Activated naive CD4-positive, alpha-beta T cell treated with anti-CD3 and anti-CD28 coated beads, Interleukin-2, amount 10 ng/mL, durations not matched to agents 7 days and 5 days (primary cell): ENCODE measurements at regions of chr7 and their contacts with region 1.

Region 1: GRCh38 chr7:100221231-100221718 is 1.5 kb downstream of the PVRIG start:
- DNase-seq: peak; percentile 88
- H3K4me3 Mint-ChIP-seq: peak overlapping the region; percentile 87
- H3K27ac Mint-ChIP-seq: peak overlapping the region; percentile 97
- H3K4me1 Mint-ChIP-seq: peaks cover 71% of the 10 kb centered on the region
- H3K27me3 Mint-ChIP-seq: no peaks in the 10 kb centered on the region

Region 2: DNA sequence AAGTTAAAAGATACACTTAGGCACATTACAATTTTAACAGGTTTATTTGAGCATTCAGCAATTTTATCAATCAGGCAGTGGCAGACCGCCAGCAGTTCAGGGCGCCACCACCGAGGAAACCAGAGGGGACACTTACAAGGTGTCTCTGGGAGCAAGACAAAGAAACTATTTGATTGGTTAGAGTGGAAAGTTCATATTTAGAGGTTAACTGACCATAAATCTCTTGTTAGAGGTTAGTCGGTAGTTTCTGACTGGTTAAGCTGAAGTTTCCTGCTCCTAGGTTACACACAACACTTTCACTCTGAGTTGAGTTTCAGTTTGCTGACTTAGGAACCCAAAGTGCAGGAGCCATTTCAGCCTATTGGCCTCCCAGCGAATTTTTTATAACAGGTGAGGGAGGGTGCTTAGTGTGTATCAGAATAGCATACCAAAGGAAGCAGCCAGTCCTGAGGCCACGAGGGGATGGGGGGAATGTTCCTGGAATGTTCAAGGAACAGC is 12.3 kb before region 1 on chr7:
- CTCF ChIA-PET with region 1: interaction called, 18 read pairs
- DNase-seq: peak; percentile 69
- H3K4me3 Mint-ChIP-seq: peak overlapping the region; percentile 49
- H3K27ac Mint-ChIP-seq: peak overlapping the region; percentile 85
- H3K4me1 Mint-ChIP-seq: peaks cover 56% of the 10 kb centered on the region
- H3K27me3 Mint-ChIP-seq: no peaks in the 10 kb centered on the region

Region 3: DNA sequence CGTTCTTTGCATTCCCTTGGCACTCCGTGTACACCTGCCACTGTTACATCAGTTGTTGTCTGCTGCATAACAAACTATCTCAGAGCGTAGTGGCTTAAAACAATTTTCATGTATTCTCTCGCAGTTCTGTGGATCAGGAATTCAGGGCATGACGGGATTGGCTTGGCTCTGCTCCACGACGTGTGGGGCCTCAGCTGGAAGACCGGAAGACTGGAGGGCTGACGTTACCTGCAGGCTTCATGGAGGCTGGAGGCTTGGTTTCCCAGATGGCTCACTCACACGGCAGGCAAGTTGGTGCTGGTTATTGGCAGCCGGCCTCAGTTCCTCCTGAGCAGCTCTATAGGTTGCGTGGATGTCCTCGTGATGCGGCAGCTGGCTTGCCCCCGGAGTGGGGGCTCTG is 288.0 kb after region 1 on chr7:
- CTCF ChIA-PET with region 1: no interaction called
- DNase-seq: no peak
- H3K4me3 Mint-ChIP-seq: no peak overlapping the region
- H3K27ac Mint-ChIP-seq: no peak overlapping the region
- H3K4me1 Mint-ChIP-seq: peaks cover 3% of the 10 kb centered on the region
- H3K27me3 Mint-ChIP-seq: peaks cover 36% of the 10 kb centered on the region